Natural killer cell (primary cell): ENCODE measurements at regions of chr11 and their contacts with region 1.

Region 1: GRCh38 chr11:64230171-64230984 is at the start of gene DNAJC4:
- DNase-seq: peak; percentile 86 to 92
- ATAC-seq: peak; percentile 64 to 78 (median 65)
- H3K4me3 ChIP-seq: peak within 1 kb of the TSS; percentile 93
- H3K4me3 Mint-ChIP-seq: peak within 1 kb of the TSS; percentile 94
- H3K27ac ChIP-seq: peak within 1 kb of the TSS; percentile 95
- H3K27ac Mint-ChIP-seq: peak within 1 kb of the TSS; percentile 93 to 97
- H3K4me1 ChIP-seq: peaks cover 66% of the 10 kb centered on the region
- H3K4me1 Mint-ChIP-seq: peaks cover 22 to 49% of the 10 kb centered on the region in 2 donors
- H3K27me3 ChIP-seq: no peaks in the 10 kb centered on the region
- H3K27me3 Mint-ChIP-seq: no peaks in the 10 kb centered on the region
- CTCF ChIP-seq: no peak
- total RNA-seq, gene DNAJC4: 45.0 to 47.0 (median 46.6) TPM

Region 2: GRCh38 chr11:64185816-64186498 is 44.4 kb before region 1 on chr11 and contains the start of gene STIP1:
- intact Hi-C with region 1: loop called (anchors 1 kb)
- DNase-seq: peak; percentile 96 to 100
- ATAC-seq: peak; percentile 85 to 95 (median 86)
- H3K4me3 ChIP-seq: peak within 1 kb of the TSS; percentile 60
- H3K4me3 Mint-ChIP-seq: peak within 1 kb of the TSS; percentile 98
- H3K27ac ChIP-seq: peak within 1 kb of the TSS; percentile 66
- H3K27ac Mint-ChIP-seq: no peak within 1 kb of the TSS
- H3K4me1 ChIP-seq: peaks cover 20% of the 10 kb centered on the region
- H3K4me1 Mint-ChIP-seq: peaks cover 6 to 31% of the 10 kb centered on the region in 2 donors
- H3K27me3 ChIP-seq: no peaks in the 10 kb centered on the region
- H3K27me3 Mint-ChIP-seq: no peaks in the 10 kb centered on the region
- CTCF ChIP-seq: no peak
- total RNA-seq, gene STIP1: 80.9 to 110 (median 85.1) TPM

Region 3: GRCh38 chr11:64196626-64197025 is 33.8 kb before region 1 on chr11:
- intact Hi-C with region 1: no loop called
- DNase-seq: no peak
- ATAC-seq: no peak
- H3K4me3 ChIP-seq: no peak overlapping the region
- H3K4me3 Mint-ChIP-seq: no peak overlapping the region
- H3K27ac ChIP-seq: no peak overlapping the region
- H3K27ac Mint-ChIP-seq: no peak overlapping the region
- H3K4me1 ChIP-seq: no peaks in the 10 kb centered on the region
- H3K4me1 Mint-ChIP-seq: peaks cover 0 to 3% of the 10 kb centered on the region in 2 donors
- H3K27me3 ChIP-seq: no peaks in the 10 kb centered on the region
- H3K27me3 Mint-ChIP-seq: no peaks in the 10 kb centered on the region
- CTCF ChIP-seq: no peak